ENCODE measurements at regions of chr6 and their contacts with region 1.

Region 1: DNA sequence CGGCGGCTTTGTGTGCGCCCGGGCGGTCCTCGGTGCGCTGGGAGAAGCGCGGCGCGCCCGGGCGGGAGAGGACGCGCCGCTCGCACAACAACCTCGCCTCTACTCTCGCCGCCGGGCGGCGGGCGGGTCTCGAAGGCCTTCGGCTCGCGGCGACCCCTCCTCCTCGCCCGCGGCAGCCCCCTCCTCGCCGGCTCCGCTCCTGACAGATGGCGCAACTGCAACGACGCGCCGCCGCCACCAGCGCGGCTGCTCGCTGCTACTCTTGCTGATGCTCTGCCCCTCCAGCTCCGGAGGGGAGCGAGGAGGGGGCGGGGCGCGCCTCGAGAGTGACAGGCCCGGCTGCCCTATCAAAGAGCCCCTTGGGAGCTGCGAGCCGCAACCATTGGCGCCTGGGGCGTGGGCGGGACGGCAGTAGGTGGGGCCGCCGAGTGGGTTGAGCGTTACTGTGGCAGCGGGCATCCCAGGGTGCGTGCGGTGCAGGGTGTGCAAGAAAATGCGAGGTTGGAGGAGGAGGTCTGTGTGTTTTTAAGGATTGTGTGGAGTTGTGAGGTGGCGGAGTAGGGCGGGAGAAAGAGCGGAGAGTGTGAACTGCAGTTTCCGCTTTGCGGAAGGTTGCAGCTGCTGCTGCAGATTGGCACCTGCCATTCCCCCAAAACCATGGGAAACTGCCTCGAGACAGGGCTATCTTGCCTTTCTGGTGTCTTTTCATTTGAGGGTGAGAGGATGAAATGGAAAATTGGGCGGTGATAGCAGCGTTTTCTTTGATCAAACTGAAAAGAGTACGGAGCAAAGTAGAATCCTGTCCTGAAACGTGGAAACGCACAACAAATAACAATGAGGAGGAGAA is at the start of gene FYN:
- DNase-seq: peak; percentile 99
- H3K4me3 Mint-ChIP-seq: peak within 1 kb of the TSS; percentile 96
- H3K27ac Mint-ChIP-seq: peak within 1 kb of the TSS; percentile 97
- H3K4me1 Mint-ChIP-seq: peaks cover 32% of the 10 kb centered on the region
- H3K27me3 Mint-ChIP-seq: no peaks in the 10 kb centered on the region
- total RNA-seq, gene FYN: 236 to 244 TPM

Region 2: GRCh38 chr6:110958329-110959192 is 914.8 kb before region 1 on chr6 and contains the start of gene GTF3C6:
- CTCF ChIA-PET with region 1: no interaction called
- intact Hi-C with region 1: loop called (anchors 1 kb)
- DNase-seq: peak; percentile 94
- H3K4me3 Mint-ChIP-seq: peak within 1 kb of the TSS; percentile 94
- H3K27ac Mint-ChIP-seq: peak within 1 kb of the TSS; percentile 96
- H3K4me1 Mint-ChIP-seq: peaks cover 14% of the 10 kb centered on the region
- H3K27me3 Mint-ChIP-seq: no peaks in the 10 kb centered on the region
- total RNA-seq, gene GTF3C6: 81.6 to 84.7 TPM

Region 3: GRCh38 chr6:111715321-111715720 is 158.1 kb before region 1 on chr6:
- CTCF ChIA-PET with region 1: interaction called, 7 read pairs
- intact Hi-C with region 1: loop called (anchors 1 kb)
- DNase-seq: peak; percentile 77
- H3K4me3 Mint-ChIP-seq: no peak overlapping the region
- H3K27ac Mint-ChIP-seq: peak overlapping the region; percentile 85
- H3K4me1 Mint-ChIP-seq: peaks cover 83% of the 10 kb centered on the region
- H3K27me3 Mint-ChIP-seq: no peaks in the 10 kb centered on the region

Region 4: DNA sequence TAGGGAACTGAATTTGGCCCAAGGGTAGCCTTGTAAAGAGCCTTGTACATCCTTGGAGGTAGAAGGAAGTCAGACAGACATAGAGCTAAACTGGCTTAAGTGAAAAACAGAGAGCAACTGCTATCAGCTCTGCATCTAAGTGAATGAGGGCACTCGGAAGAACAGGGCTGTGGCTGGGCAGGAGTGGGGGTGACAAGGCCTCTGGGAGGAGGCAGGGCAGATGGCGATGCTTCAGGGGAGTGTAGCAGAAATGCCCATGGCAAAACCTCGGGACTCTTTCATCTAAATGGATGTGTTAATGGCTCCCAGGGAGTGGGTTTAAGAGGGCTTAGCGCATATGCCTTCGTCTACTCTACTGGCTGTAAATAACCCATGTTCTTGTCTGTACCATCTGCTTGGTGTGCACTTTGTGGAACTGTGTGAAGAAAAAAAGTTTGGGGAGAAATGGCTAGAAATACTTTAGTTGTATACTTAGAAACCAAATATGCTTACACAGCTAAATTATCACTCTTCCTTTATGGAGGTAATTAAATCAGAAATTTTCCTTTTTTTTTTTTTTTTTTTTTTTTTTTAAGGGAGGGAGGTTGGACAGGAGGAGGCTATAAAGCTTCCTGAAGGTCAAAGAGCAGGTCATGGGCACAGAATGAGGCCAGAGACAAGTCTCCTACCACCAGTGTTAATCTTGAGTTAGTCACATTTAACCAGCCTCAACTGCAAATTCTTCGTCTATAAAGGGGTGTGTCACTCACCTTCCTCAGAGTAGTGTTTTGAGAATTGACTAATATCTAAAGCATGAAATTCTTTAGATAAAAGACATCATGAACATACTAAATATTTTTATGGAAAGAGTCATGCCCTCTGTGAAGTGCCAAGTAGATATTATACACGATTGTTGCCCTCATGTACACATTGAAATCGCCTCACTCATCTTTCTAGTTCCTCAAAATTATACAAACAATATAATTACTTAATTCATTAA is 61.1 kb before region 1 on chr6:
- CTCF ChIA-PET with region 1: no interaction called
- intact Hi-C with region 1: loop called (anchors 1 kb)
- DNase-seq: no peak
- H3K4me3 Mint-ChIP-seq: no peak overlapping the region
- H3K27ac Mint-ChIP-seq: peak overlapping the region; percentile 93
- H3K4me1 Mint-ChIP-seq: peaks cover 82% of the 10 kb centered on the region
- H3K27me3 Mint-ChIP-seq: no peaks in the 10 kb centered on the region

Region 5: DNA sequence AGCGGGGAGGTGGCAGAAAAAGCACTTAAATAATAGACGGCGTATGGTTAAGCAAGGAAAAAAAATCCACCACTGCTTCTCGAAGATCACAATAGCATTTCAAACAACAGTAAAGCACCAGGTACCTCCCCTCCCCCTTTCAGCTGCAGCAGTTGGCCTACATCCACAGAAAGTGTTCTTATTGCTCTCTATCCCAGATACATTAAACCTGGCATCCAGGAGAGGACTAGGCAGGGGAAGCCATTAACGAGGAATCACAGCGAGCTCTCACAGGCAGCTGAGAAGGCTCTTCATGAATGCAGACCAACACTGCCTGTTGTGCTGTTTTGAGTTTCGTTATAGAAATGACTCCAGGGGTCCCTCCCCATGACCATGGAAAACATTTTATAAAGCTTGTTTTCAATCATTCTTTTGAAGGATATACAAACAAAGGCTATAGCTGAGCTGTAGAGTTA is 11.9 kb before region 1 on chr6:
- CTCF ChIA-PET with region 1: interaction called, 3 read pairs
- intact Hi-C with region 1: loop called (anchors 1 kb)
- DNase-seq: peak; percentile 55
- H3K4me3 Mint-ChIP-seq: no peak overlapping the region
- H3K27ac Mint-ChIP-seq: peak overlapping the region; percentile 72
- H3K4me1 Mint-ChIP-seq: peaks cover 99% of the 10 kb centered on the region
- H3K27me3 Mint-ChIP-seq: no peaks in the 10 kb centered on the region

Region 6: GRCh38 chr6:111888928-111889695 is 15.7 kb after region 1 on chr6:
- CTCF ChIA-PET with region 1: no interaction called
- intact Hi-C with region 1: no loop called
- DNase-seq: no peak
- H3K4me3 Mint-ChIP-seq: no peak overlapping the region
- H3K27ac Mint-ChIP-seq: no peak overlapping the region
- H3K4me1 Mint-ChIP-seq: no peaks in the 10 kb centered on the region
- H3K27me3 Mint-ChIP-seq: no peaks in the 10 kb centered on the region

Region 7: DNA sequence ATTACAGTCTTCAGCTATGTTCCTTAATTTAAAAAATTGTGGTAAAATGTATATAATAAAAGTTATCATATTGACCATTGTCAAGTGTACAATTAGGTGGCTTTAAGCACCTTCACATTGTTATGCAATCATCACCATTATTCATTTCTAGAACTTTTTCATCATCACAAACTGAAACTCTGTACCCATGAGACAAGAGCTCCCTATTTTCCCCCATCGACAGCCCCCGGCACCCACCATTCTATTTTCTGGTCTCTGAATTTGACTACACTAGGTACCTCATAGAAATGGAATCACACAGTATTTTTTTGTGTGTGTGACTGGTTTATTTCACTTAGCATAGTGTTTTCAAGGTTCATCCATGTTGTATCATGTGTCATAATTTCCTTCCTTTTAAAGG is 39.5 kb after region 1 on chr6:
- CTCF ChIA-PET with region 1: no interaction called
- intact Hi-C with region 1: no loop called
- DNase-seq: peak; percentile 39
- H3K4me3 Mint-ChIP-seq: no peak overlapping the region
- H3K27ac Mint-ChIP-seq: no peak overlapping the region
- H3K4me1 Mint-ChIP-seq: peaks cover 8% of the 10 kb centered on the region
- H3K27me3 Mint-ChIP-seq: no peaks in the 10 kb centered on the region

Region 8: DNA sequence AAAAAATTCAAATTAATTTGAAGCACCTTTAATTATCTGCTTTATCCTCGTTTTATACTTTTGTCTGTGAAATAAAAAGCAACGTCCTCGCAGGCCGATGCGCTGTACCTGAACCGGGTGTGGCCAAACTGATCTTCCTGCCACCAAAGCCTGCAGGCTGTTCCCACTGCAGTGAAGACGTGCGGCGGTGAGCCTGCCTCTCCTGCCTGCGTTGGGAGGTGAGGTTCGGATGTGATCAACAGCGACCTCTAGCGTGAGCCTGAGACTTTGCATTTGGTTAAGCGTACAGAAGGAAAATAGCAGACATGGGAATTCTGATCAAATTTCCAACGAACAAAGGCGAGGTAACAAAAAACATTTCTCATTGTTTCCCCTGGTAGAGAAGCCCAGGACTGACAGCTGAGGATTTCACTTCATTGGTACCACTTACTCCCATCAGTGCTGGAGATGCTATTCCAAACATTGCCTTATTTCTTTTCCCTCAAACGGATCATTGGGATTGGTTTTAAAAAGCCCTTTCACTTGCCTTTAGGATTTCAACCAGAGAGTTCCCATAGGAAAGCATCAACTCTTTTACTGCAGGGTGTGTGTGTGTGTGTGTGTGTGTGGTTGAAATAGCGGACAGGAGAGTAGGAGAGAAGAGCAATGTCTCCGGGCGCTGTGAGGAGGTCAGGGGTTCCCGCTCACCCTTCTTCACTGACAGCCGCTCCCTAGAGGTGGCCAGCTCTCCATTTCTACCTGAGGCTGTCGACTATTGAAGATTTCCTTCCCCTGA is 123.9 kb after region 1 on chr6:
- CTCF ChIA-PET with region 1: interaction called, 14 read pairs
- intact Hi-C with region 1: loop called (anchors 1 kb)
- DNase-seq: peak; percentile 89
- H3K4me3 Mint-ChIP-seq: peak overlapping the region; percentile 53
- H3K27ac Mint-ChIP-seq: peak overlapping the region; percentile 65
- H3K4me1 Mint-ChIP-seq: peaks cover 47% of the 10 kb centered on the region
- H3K27me3 Mint-ChIP-seq: no peaks in the 10 kb centered on the region

Measured in activated naive CD4-positive, alpha-beta T cell treated with anti-CD3 and anti-CD28 coated beads for 36 hours (primary cell).